Activated naive CD4-positive, alpha-beta T cell treated with anti-CD3 and anti-CD28 coated beads for 36 hours (primary cell): ENCODE measurements at regions of chr1 and their contacts with region 1.

Region 1: GRCh38 chr1:16206547-16207317 is 5.7 kb downstream of the ARHGEF19 start:
- DNase-seq: peak; percentile 95
- H3K4me3 Mint-ChIP-seq: peak overlapping the region; percentile 83
- H3K27ac Mint-ChIP-seq: peak overlapping the region; percentile 87
- H3K4me1 Mint-ChIP-seq: peaks cover 4% of the 10 kb centered on the region
- H3K27me3 Mint-ChIP-seq: no peaks in the 10 kb centered on the region

Region 2: GRCh38 chr1:16078925-16079656 is 127.6 kb before region 1 on chr1:
- CTCF ChIA-PET with region 1: interaction called, 10 read pairs
- intact Hi-C with region 1: no loop called
- DNase-seq: peak; percentile 85
- H3K4me3 Mint-ChIP-seq: peak overlapping the region; percentile 67
- H3K27ac Mint-ChIP-seq: peak overlapping the region; percentile 65
- H3K4me1 Mint-ChIP-seq: peaks cover 4% of the 10 kb centered on the region
- H3K27me3 Mint-ChIP-seq: peaks cover 4% of the 10 kb centered on the region

Region 3: DNA sequence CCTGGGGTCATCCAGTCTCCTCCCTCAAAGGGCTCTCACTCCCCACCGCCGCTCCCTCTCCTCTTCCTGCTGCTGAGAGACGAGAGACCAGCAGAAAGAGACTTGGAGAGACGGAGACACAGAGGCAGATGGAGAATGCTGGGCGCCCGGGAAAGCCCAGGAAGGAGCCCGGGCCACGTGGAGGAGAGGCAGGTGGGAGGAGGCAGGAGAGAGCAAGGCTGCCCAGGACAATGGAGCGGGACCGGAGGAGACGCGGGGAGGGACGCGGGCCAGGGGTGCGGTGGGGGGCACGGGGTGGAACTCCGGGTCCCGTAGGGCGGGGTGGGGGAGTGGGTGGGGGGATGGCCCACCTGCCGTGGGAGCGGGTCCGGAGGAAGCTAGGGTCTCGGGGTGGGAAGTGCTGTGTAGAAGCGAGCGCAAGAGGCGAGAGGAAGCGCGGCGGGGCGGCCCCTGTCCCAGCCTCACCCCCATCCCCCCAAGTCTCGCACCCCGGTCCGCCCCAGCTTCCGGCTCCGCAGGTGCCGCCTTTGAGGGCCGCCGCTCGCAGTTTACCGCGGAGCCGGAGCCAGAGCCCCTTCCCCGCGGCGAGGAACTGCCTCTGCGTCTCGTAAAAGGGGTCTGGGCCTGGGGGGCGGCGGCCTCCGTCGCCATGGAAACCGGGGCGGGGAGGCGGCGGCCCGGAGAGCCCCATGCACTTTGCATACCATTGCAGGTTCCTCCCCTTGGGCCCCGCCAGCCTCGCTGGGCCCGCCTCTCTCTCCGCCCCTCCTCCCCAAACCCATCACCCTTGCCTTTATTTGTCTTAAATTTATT is 39.2 kb before region 1 on chr1:
- CTCF ChIA-PET with region 1: interaction called, 3 read pairs
- intact Hi-C with region 1: loop called (anchors 2 kb)
- DNase-seq: peak; percentile 76
- H3K4me3 Mint-ChIP-seq: peak overlapping the region; percentile 60
- H3K27ac Mint-ChIP-seq: no peak overlapping the region
- H3K4me1 Mint-ChIP-seq: peaks cover 50% of the 10 kb centered on the region
- H3K27me3 Mint-ChIP-seq: no peaks in the 10 kb centered on the region

Region 4: GRCh38 chr1:16217061-16217785 is 10.5 kb after region 1 on chr1:
- CTCF ChIA-PET with region 1: interaction called, 6 read pairs
- intact Hi-C with region 1: loop called (anchors 1 kb)
- DNase-seq: peak; percentile 98
- H3K4me3 Mint-ChIP-seq: peak overlapping the region; percentile 82
- H3K27ac Mint-ChIP-seq: no peak overlapping the region
- H3K4me1 Mint-ChIP-seq: peaks cover 17% of the 10 kb centered on the region
- H3K27me3 Mint-ChIP-seq: no peaks in the 10 kb centered on the region

Region 5: GRCh38 chr1:16236511-16237342 is 30.0 kb after region 1 on chr1 and contains the start of gene CPLANE2:
- CTCF ChIA-PET with region 1: interaction called, 7 read pairs
- intact Hi-C with region 1: loop called (anchors 1 kb)
- DNase-seq: peak; percentile 98
- H3K4me3 Mint-ChIP-seq: peak within 1 kb of the TSS; percentile 84
- H3K27ac Mint-ChIP-seq: peak within 1 kb of the TSS; percentile 88
- H3K4me1 Mint-ChIP-seq: peaks cover 14% of the 10 kb centered on the region
- H3K27me3 Mint-ChIP-seq: no peaks in the 10 kb centered on the region
- total RNA-seq, gene CPLANE2: 2.7 to 4.0 TPM

Region 6: GRCh38 chr1:16243936-16244649 is 37.4 kb after region 1 on chr1:
- CTCF ChIA-PET with region 1: interaction called, 22 read pairs
- intact Hi-C with region 1: loop called (anchors 1 kb)
- DNase-seq: peak; percentile 91
- H3K4me3 Mint-ChIP-seq: no peak overlapping the region
- H3K27ac Mint-ChIP-seq: no peak overlapping the region
- H3K4me1 Mint-ChIP-seq: peaks cover 10% of the 10 kb centered on the region
- H3K27me3 Mint-ChIP-seq: no peaks in the 10 kb centered on the region

Region 7: GRCh38 chr1:16440470-16441281 is 233.9 kb after region 1 on chr1 and contains the start of gene NECAP2:
- CTCF ChIA-PET with region 1: no interaction called
- intact Hi-C with region 1: loop called (anchors 2 kb)
- DNase-seq: peak; percentile 97
- H3K4me3 Mint-ChIP-seq: peak within 1 kb of the TSS; percentile 86
- H3K27ac Mint-ChIP-seq: peak within 1 kb of the TSS; percentile 90
- H3K4me1 Mint-ChIP-seq: peaks cover 36% of the 10 kb centered on the region
- H3K27me3 Mint-ChIP-seq: no peaks in the 10 kb centered on the region
- total RNA-seq, gene NECAP2: 53.3 to 53.4 TPM